Naive thymus-derived CD4-positive, alpha-beta T cell (primary cell): ENCODE measurements at regions of chr19 and their contacts with region 1.

Region 1: GRCh38 chr19:48468775-48469288 is 337 bp upstream of the CYTH2 start:
- DNase-seq: peak; percentile 93 to 100 (median 100)
- ATAC-seq: peak; percentile 93
- H3K4me3 ChIP-seq: peak overlapping the region; percentile 93
- H3K4me3 Mint-ChIP-seq: peak overlapping the region; percentile 81 to 96 (median 92)
- H3K27ac ChIP-seq: peak overlapping the region; percentile 86
- H3K27ac Mint-ChIP-seq: peak overlapping the region; percentile 85 to 96 (median 90)
- H3K4me1 ChIP-seq: peaks cover 7 to 15% of the 10 kb centered on the region in 2 donors
- H3K4me1 Mint-ChIP-seq: peaks cover 0 to 30% (median 18%) of the 10 kb centered on the region in 7 donors
- H3K27me3 ChIP-seq: no peaks in the 10 kb centered on the region
- H3K27me3 Mint-ChIP-seq: no peaks in the 10 kb centered on the region

Region 2: GRCh38 chr19:48170038-48170812 is 298.6 kb before region 1 on chr19 and contains the starts of genes LIG1 and ZSWIM9:
- CTCF ChIA-PET with region 1: no interaction called
- POLR2A ChIA-PET with region 1: no interaction called
- intact Hi-C with region 1: loop called in 1 of 2 experiments (anchors 1 kb)
- DNase-seq: peak; percentile 87 to 96 (median 94)
- ATAC-seq: peak; percentile 89
- H3K4me3 ChIP-seq: peak within 1 kb of the TSS; percentile 98
- H3K4me3 Mint-ChIP-seq: peak within 1 kb of the TSS; percentile 90 to 100 (median 97)
- H3K27ac ChIP-seq: peak within 1 kb of the TSS; percentile 94
- H3K27ac Mint-ChIP-seq: peak within 1 kb of the TSS; percentile 92 to 100 (median 97)
- H3K4me1 ChIP-seq: peaks cover 14 to 16% of the 10 kb centered on the region in 2 donors
- H3K4me1 Mint-ChIP-seq: peaks cover 20 to 44% (median 32%) of the 10 kb centered on the region in 7 donors
- H3K27me3 ChIP-seq: no peaks in the 10 kb centered on the region
- H3K27me3 Mint-ChIP-seq: no peaks in the 10 kb centered on the region
- total RNA-seq, gene LIG1: 61.0 to 134 (median 122) TPM
- total RNA-seq, gene ZSWIM9: 5.0 to 11.6 (median 7.4) TPM

Region 3: DNA sequence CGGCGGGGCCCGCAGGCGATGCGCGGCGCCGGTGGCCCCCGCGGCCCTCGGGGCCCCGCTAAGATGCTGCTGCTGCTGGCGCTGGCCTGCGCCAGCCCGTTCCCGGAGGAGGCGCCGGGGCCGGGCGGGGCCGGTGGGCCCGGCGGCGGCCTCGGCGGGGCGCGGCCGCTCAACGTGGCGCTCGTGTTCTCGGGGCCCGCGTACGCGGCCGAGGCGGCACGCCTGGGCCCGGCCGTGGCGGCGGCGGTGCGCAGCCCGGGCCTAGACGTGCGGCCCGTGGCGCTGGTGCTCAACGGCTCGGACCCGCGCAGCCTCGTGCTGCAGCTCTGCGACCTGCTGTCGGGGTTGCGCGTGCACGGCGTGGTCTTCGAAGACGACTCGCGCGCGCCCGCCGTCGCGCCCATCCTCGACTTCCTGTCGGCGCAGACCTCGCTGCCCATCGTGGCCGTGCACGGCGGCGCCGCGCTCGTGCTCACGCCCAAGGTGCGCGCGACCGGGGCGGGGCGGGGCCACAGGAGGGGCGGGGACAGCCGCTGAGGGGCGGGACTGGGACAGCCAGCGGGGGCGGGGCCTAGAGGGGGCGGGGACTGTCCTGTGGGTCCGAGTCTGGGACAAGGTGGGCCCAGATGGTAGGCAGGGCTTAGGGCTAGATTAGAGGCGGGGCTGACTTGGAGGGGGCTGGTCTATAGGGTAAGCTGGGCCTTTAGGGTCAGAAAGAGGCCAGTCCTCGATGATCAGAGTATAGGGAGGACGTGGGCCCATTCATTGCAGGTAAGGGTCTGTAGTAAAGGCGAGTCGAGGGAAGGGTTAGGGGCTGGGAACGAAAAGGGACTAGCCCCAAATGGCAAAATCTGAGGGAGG is 70.2 kb before region 1 on chr19:
- CTCF ChIA-PET with region 1: no interaction called
- POLR2A ChIA-PET with region 1: no interaction called
- intact Hi-C with region 1: loop called (anchors 2 to 5 kb)
- DNase-seq: peak; percentile 77 to 88 (median 86)
- ATAC-seq: peak; percentile 90
- H3K4me3 ChIP-seq: peak overlapping the region; percentile 63
- H3K4me3 Mint-ChIP-seq: peak overlapping the region; percentile 54 to 96 (median 79)
- H3K27ac ChIP-seq: peak overlapping the region; percentile 59
- H3K27ac Mint-ChIP-seq: peak overlapping the region; percentile 22 to 97 (median 85)
- H3K4me1 ChIP-seq: peaks cover 17 to 29% of the 10 kb centered on the region in 2 donors
- H3K4me1 Mint-ChIP-seq: peaks cover 18 to 51% (median 41%) of the 10 kb centered on the region in 7 donors
- H3K27me3 ChIP-seq: peaks cover 9 to 21% of the 10 kb centered on the region in 2 donors
- H3K27me3 Mint-ChIP-seq: peaks cover 15 to 43% (median 31%) of the 10 kb centered on the region in 5 donors

Region 4: GRCh38 chr19:48445606-48446481 is 23.0 kb before region 1 on chr19 and contains the start of gene GRWD1:
- CTCF ChIA-PET with region 1: no interaction called
- POLR2A ChIA-PET with region 1: interaction called, 5 read pairs
- intact Hi-C with region 1: loop called (anchors 1 kb)
- DNase-seq: peak; percentile 63 to 98 (median 93)
- ATAC-seq: peak; percentile 95
- H3K4me3 ChIP-seq: peak within 1 kb of the TSS; percentile 80
- H3K4me3 Mint-ChIP-seq: peak within 1 kb of the TSS; percentile 87 to 96 (median 93)
- H3K27ac ChIP-seq: peak within 1 kb of the TSS; percentile 83
- H3K27ac Mint-ChIP-seq: peak within 1 kb of the TSS; percentile 90 to 98 (median 95)
- H3K4me1 ChIP-seq: peaks cover 20 to 22% of the 10 kb centered on the region in 2 donors
- H3K4me1 Mint-ChIP-seq: peaks cover 19 to 44% (median 37%) of the 10 kb centered on the region in 7 donors
- H3K27me3 ChIP-seq: peaks cover 0 to 8% of the 10 kb centered on the region in 2 donors
- H3K27me3 Mint-ChIP-seq: peaks cover 12 to 33% (median 21%) of the 10 kb centered on the region in 5 donors
- total RNA-seq, gene GRWD1: 26.1 to 45.8 (median 36.3) TPM

Region 5: GRCh38 chr19:48513289-48514122 is 44.7 kb after region 1 on chr19:
- CTCF ChIA-PET with region 1: interaction called, 3 read pairs
- POLR2A ChIA-PET with region 1: no interaction called
- intact Hi-C with region 1: loop called (anchors 1 to 2 kb)
- DNase-seq: peak in 8 of 9 donors; percentile 69 to 84 (median 78)
- ATAC-seq: peak; percentile 77
- H3K4me3 ChIP-seq: peak overlapping the region; percentile 72
- H3K4me3 Mint-ChIP-seq: no peak overlapping the region
- H3K27ac ChIP-seq: peak overlapping the region; percentile 82
- H3K27ac Mint-ChIP-seq: peak overlapping the region in 3 of 9 donors; percentile 68 to 91 (median 90)
- H3K4me1 ChIP-seq: peaks cover 21 to 22% of the 10 kb centered on the region in 2 donors
- H3K4me1 Mint-ChIP-seq: peaks cover 11 to 18% (median 13%) of the 10 kb centered on the region in 7 donors
- H3K27me3 ChIP-seq: no peaks in the 10 kb centered on the region
- H3K27me3 Mint-ChIP-seq: no peaks in the 10 kb centered on the region

Region 6: DNA sequence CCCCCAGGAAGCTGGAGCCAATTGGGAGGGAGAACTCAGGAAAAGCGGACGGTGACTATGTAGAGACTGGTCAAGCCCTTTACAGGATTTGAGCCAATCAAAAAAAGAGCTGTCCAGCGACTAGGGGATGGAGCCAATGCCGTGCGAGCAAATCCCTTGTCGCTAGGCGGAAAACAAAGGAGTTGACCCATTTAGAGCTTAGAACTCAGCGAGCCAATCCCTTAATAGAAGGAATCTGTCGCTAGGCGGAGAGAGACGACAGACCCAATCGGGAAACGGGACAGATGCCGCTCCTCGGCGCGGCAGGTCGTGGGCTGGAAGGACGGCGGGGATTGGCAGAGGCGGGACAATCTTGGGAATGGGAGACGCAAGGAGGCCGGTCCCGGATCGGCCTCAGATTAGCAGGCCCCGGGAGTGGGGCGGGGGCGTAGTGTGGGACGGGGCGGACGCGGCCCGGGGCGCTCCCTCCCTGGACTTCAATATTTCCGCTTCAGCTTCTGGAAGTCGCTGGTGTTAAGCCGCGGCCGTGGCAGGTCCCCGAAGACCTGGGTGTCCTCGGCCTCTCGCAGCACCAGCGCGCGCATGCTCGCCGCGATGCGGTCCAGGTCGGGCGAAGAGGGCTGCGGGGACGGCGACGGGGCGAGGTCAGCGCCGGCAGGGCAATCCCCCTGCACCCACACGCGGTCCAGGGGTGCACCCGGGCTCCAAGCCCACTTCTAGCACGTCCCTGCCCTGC is 1400.8 kb after region 1 on chr19:
- CTCF ChIA-PET with region 1: no interaction called
- POLR2A ChIA-PET with region 1: no interaction called
- intact Hi-C with region 1: loop called in 1 of 2 experiments (anchors 2 kb)
- DNase-seq: peak; percentile 83 to 94 (median 87)
- ATAC-seq: peak; percentile 87
- H3K4me3 ChIP-seq: peak overlapping the region; percentile 58
- H3K4me3 Mint-ChIP-seq: peak overlapping the region in 2 of 10 donors; percentile 87
- H3K27ac ChIP-seq: peak overlapping the region; percentile 72
- H3K27ac Mint-ChIP-seq: peak overlapping the region in 5 of 9 donors; percentile 59 to 87 (median 74)
- H3K4me1 ChIP-seq: peaks cover 31 to 38% of the 10 kb centered on the region in 2 donors
- H3K4me1 Mint-ChIP-seq: peaks cover 25 to 51% (median 45%) of the 10 kb centered on the region in 7 donors
- H3K27me3 ChIP-seq: no peaks in the 10 kb centered on the region
- H3K27me3 Mint-ChIP-seq: no peaks in the 10 kb centered on the region